CD4-positive, alpha-beta T cell (primary cell): ENCODE measurements at regions of chr1 and their contacts with region 1.

Region 1: DNA sequence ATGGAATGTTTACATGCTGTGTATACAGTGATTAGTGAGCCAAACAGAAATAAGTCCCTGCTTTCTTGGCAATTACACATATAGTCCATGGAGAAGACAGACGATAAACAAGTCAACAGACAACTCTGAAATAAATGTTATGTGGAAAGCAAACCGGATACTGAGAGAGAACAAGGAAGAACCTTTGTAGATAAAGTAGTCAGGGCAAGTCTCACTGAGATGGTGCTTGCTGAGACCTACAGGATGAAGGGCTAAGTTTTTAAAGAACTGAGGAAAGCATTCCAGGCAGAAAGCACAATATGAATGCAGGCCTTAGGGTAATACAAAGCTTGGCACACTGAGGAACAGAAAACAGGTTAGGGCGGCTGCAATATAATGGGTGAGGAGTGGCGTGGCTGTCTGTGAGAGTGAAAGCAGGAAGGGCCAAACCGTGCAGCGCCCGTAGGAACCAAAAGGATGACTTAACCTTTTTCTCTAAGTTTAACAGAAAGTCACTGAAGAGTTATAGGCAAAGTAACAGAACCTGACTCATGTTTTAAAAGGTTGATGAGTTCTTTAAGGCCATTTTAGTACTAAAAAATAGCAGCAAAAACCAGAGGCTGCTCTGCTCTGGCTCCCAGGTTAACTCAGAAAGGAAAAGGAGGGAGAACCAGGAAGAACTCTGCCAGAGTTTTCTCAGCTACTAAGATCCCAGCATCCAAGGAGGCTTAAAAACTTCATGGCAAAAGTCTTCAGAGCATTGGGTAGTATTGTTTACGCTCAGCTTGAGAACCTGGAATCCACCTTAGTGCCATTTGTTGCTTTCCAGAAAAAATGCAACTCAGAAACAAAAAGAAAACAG is 8.7 kb upstream of the TTF2 start:
- DNase-seq: peak in 8 of 14 experiments; percentile 13 to 55 (median 39)
- ATAC-seq: no peak
- H3K4me3 ChIP-seq: peak overlapping the region; percentile 35
- H3K4me3 Mint-ChIP-seq: peak overlapping the region; percentile 46
- H3K27ac ChIP-seq: peak overlapping the region in 1 of 2 donors; percentile 27
- H3K27ac Mint-ChIP-seq: peak overlapping the region; percentile 93
- H3K4me1 ChIP-seq: peaks cover 33% of the 10 kb centered on the region
- H3K4me1 Mint-ChIP-seq: peaks cover 63% of the 10 kb centered on the region
- H3K27me3 ChIP-seq: no peaks in the 10 kb centered on the region
- H3K27me3 Mint-ChIP-seq: no peaks in the 10 kb centered on the region
- CTCF ChIP-seq: no peak

Region 2: DNA sequence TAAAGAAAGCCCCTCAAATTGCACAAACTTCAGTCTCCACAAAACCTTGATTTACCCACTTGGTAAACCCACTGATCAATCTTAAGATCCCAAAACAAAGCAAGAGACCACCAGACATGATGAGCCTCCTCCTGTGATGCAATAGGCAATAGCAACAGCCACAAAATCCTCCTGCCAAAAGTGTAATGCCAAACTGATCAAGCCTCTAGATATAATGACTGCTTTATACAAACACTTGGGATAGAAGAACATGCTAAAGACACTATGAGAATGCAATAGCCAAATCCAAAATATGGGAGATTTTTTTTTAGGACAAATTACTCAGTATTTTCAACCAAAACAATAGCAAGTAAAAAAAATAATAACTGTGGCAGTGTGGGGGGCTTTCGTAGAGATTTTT is 206.7 kb before region 1 on chr1:
- CTCF ChIA-PET with region 1: no interaction called
- POLR2A ChIA-PET with region 1: no interaction called
- intact Hi-C with region 1: loop called in 1 of 2 experiments (anchors 1 kb)
- DNase-seq: no peak
- ATAC-seq: no peak
- H3K4me3 ChIP-seq: no peak overlapping the region
- H3K4me3 Mint-ChIP-seq: no peak overlapping the region
- H3K27ac ChIP-seq: no peak overlapping the region
- H3K27ac Mint-ChIP-seq: no peak overlapping the region
- H3K4me1 ChIP-seq: peaks cover 4% of the 10 kb centered on the region
- H3K4me1 Mint-ChIP-seq: peaks cover 4% of the 10 kb centered on the region
- H3K27me3 ChIP-seq: no peaks in the 10 kb centered on the region
- H3K27me3 Mint-ChIP-seq: no peaks in the 10 kb centered on the region
- CTCF ChIP-seq: no peak

Region 3: GRCh38 chr1:116853670-116854402 is 197.6 kb before region 1 on chr1:
- CTCF ChIA-PET with region 1: interaction called, 3 read pairs
- POLR2A ChIA-PET with region 1: no interaction called
- intact Hi-C with region 1: loop called (anchors 1 to 2 kb)
- DNase-seq: peak in 2 of 14 experiments; percentile 18 to 35
- ATAC-seq: no peak
- H3K4me3 ChIP-seq: no peak overlapping the region
- H3K4me3 Mint-ChIP-seq: no peak overlapping the region
- H3K27ac ChIP-seq: no peak overlapping the region
- H3K27ac Mint-ChIP-seq: no peak overlapping the region
- H3K4me1 ChIP-seq: peaks cover 6% of the 10 kb centered on the region
- H3K4me1 Mint-ChIP-seq: peaks cover 24% of the 10 kb centered on the region
- H3K27me3 ChIP-seq: no peaks in the 10 kb centered on the region
- H3K27me3 Mint-ChIP-seq: no peaks in the 10 kb centered on the region
- CTCF ChIP-seq: no peak

Region 4: DNA sequence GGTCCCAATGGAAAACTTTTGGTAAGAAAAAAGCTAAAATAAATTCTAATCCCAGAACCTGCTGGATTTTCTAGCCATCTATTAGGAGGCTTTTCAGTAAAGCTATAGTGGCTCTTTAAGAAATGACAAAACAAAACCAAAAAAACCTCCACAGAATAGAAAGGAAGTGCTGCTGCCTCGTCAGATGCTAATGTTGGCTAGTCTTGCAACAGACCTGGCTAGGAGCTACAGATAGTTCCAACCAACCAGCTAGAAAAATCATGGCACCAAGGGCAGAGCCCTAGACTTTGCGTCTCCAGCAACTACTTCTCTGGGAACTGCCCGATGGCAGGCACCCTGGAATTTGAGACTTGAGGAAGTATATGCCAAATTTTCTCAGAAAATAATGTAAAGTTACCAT is 42.3 kb before region 1 on chr1:
- CTCF ChIA-PET with region 1: no interaction called
- POLR2A ChIA-PET with region 1: no interaction called
- intact Hi-C with region 1: loop called in 1 of 2 experiments (anchors 2 kb)
- DNase-seq: peak in 3 of 14 experiments; percentile 43 to 59 (median 45)
- ATAC-seq: peak; percentile 54
- H3K4me3 ChIP-seq: no peak overlapping the region
- H3K4me3 Mint-ChIP-seq: peak overlapping the region; percentile 62
- H3K27ac ChIP-seq: no peak overlapping the region
- H3K27ac Mint-ChIP-seq: peak overlapping the region; percentile 93
- H3K4me1 ChIP-seq: peaks cover 38% of the 10 kb centered on the region
- H3K4me1 Mint-ChIP-seq: peaks cover 74% of the 10 kb centered on the region
- H3K27me3 ChIP-seq: no peaks in the 10 kb centered on the region
- H3K27me3 Mint-ChIP-seq: no peaks in the 10 kb centered on the region
- CTCF ChIP-seq: no peak

Region 5: GRCh38 chr1:117026361-117026760 is 25.1 kb before region 1 on chr1:
- CTCF ChIA-PET with region 1: no interaction called
- POLR2A ChIA-PET with region 1: no interaction called
- intact Hi-C with region 1: no loop called
- DNase-seq: no peak
- ATAC-seq: no peak
- H3K4me3 ChIP-seq: no peak overlapping the region
- H3K4me3 Mint-ChIP-seq: no peak overlapping the region
- H3K27ac ChIP-seq: no peak overlapping the region
- H3K27ac Mint-ChIP-seq: no peak overlapping the region
- H3K4me1 ChIP-seq: peaks cover 2% of the 10 kb centered on the region
- H3K4me1 Mint-ChIP-seq: no peaks in the 10 kb centered on the region
- H3K27me3 ChIP-seq: no peaks in the 10 kb centered on the region
- H3K27me3 Mint-ChIP-seq: no peaks in the 10 kb centered on the region
- CTCF ChIP-seq: no peak